MCF 10A (cell line): ENCODE measurements at regions of chr11 and their contacts with region 1.

Region 1: GRCh38 chr11:90423378-90423777 is 200.5 kb upstream of the CHORDC1 start:
- DNase-seq: no peak
- H3K4me3 Mint-ChIP-seq: no peak overlapping the region
- H3K27ac Mint-ChIP-seq: no peak overlapping the region
- H3K4me1 Mint-ChIP-seq: no peaks in the 10 kb centered on the region
- H3K27me3 Mint-ChIP-seq: no peaks in the 10 kb centered on the region
- CTCF ChIP-seq: no peak

Region 2: GRCh38 chr11:90373971-90374370 is 49.4 kb before region 1 on chr11:
- CTCF ChIA-PET with region 1: no interaction called
- POLR2A ChIA-PET with region 1: no interaction called
- intact Hi-C with region 1: loop called (anchors 10 kb)
- DNase-seq: no peak
- H3K4me3 Mint-ChIP-seq: no peak overlapping the region
- H3K27ac Mint-ChIP-seq: no peak overlapping the region
- H3K4me1 Mint-ChIP-seq: no peaks in the 10 kb centered on the region
- H3K27me3 Mint-ChIP-seq: no peaks in the 10 kb centered on the region
- CTCF ChIP-seq: no peak

Region 3: DNA sequence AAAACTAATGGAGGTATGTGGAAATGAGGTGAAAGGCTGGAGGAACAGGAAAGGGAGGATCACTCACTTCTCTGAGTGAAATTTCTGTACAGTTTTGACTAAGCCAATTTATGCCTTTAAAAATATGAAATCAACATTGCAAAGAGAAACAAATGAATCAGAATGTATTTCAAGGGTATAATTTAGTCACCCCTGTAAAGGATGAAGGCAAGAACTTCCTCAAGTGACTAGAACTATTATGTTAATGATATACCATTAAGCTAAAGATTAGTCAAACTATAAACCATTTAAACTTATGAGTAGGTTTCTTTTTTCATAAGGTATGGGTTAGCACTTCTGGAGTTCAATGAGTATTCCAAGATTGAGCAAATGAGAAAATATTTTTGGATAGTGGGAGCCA is 16.0 kb before region 1 on chr11:
- CTCF ChIA-PET with region 1: no interaction called
- POLR2A ChIA-PET with region 1: no interaction called
- intact Hi-C with region 1: no loop called
- DNase-seq: no peak
- H3K4me3 Mint-ChIP-seq: no peak overlapping the region
- H3K27ac Mint-ChIP-seq: no peak overlapping the region
- H3K4me1 Mint-ChIP-seq: no peaks in the 10 kb centered on the region
- H3K27me3 Mint-ChIP-seq: no peaks in the 10 kb centered on the region
- CTCF ChIP-seq: no peak